BJ (cell line): ENCODE measurements at regions of chr6 and their contacts with region 1.

Region 1: GRCh38 chr6:113920663-113921267 is 50.2 kb downstream of the HDAC2 start:
- DNase-seq: no peak
- H3K4me3 ChIP-seq: no peak overlapping the region
- H3K27me3 ChIP-seq: no peaks in the 10 kb centered on the region
- CTCF ChIP-seq: no peak

Region 2: DNA sequence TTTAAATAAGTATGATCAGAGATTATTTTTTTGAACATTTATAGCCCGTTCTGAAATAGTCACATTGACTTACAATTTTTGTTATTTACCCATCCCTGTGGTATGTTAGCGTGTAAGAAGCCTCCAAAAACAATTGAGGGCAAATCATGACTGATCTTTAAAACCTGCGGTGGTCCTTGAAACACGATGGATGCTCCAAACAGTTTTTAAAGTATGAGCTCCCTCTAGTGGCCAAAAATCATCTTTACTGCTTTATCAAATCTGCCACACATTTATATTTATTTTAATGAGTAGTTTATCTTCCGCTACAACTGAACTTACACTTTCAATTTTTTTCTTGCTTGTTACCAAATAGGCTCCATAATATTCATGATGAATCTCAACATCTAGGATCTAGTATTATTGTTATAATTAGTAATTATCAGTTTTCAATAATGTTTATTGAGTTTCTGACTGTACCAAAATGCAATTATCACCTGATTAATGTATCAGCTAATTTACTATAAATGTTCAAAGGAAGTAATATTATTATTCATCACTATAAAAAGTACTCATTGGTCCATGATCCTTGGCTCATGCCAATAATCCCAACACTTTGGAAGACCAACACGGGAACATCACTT is 11.4 kb before region 1 on chr6:
- CTCF ChIA-PET with region 1: interaction called, 10 read pairs
- POLR2A ChIA-PET with region 1: no interaction called
- DNase-seq: no peak
- H3K4me3 ChIP-seq: no peak overlapping the region
- H3K27me3 ChIP-seq: no peaks in the 10 kb centered on the region
- CTCF ChIP-seq: peak; percentile 53